ENCODE measurements at regions of chr6 and their contacts with region 1.

Region 1: GRCh38 chr6:105484238-105485161 is 81.6 kb upstream of the PREP start:
- DNase-seq: peak; percentile 55
- ATAC-seq: peak; percentile 80
- H3K4me3 ChIP-seq: no peak overlapping the region
- H3K27ac ChIP-seq: no peak overlapping the region
- H3K4me1 ChIP-seq: peaks cover 15% of the 10 kb centered on the region
- H3K27me3 ChIP-seq: no peaks in the 10 kb centered on the region
- CTCF ChIP-seq: peak; percentile 95
- POLR2A ChIP-seq: peak; percentile 57; the same call in 1 of the 2 replicates
- RAD21 ChIP-seq: peak; percentile 97

Region 2: DNA sequence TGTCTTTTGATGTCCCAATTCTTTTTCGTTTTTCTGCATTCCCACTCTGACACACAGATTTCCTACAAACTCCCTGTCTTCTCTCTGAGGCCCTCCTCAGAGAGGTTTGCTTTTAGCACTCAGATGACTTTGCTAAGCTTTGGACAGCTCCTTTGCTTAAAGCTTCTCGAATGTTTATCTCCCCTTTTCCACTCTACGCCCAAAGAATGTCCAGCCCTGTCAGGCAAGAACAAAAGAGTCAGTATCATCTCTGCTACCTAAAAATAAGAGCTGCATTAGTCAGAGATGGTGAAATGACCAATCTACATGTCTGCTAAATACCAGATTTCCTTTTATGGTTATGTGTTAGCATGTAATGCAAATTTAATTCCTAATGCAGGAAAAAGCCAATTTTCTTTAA is 138.4 kb before region 1 on chr6:
- CTCF ChIA-PET with region 1: no interaction called
- POLR2A ChIA-PET with region 1: no interaction called
- dilution Hi-C with region 1: no loop called
- in situ Hi-C with region 1: no loop called
- intact Hi-C with region 1: no loop called
- DNase-seq: peak; percentile 93
- ATAC-seq: peak; percentile 99
- H3K4me3 ChIP-seq: no peak overlapping the region
- H3K27ac ChIP-seq: no peak overlapping the region
- H3K4me1 ChIP-seq: peaks cover 4% of the 10 kb centered on the region; the same call in 1 of the 2 replicates
- H3K27me3 ChIP-seq: no peaks in the 10 kb centered on the region
- CTCF ChIP-seq: no peak
- POLR2A ChIP-seq: no peak
- RAD21 ChIP-seq: no peak

Region 3: DNA sequence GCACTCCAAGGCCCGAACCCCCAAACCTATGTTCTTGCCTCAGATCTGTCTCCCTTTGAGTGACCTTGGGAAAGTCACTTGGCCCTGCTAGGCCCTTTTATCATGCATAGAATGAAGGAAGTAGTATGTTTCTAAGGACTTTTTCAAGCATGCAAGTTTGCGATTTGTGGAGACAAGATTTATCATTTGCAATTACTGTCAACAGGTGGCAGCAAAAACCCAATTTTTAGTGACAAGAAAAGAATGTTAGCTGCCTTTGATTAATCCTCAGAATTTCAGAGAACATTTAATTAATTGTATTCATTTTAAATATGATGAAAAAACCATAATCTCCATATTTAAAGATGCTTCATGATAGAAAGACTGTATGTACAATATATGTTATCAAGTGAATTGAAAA is 53.3 kb before region 1 on chr6:
- CTCF ChIA-PET with region 1: interaction called, 7 read pairs
- POLR2A ChIA-PET with region 1: no interaction called
- dilution Hi-C with region 1: no loop called
- in situ Hi-C with region 1: no loop called
- intact Hi-C with region 1: loop called (anchors 5 kb)
- DNase-seq: peak; percentile 68
- ATAC-seq: no peak
- H3K4me3 ChIP-seq: no peak overlapping the region
- H3K27ac ChIP-seq: no peak overlapping the region
- H3K4me1 ChIP-seq: peaks cover 23% of the 10 kb centered on the region
- H3K27me3 ChIP-seq: no peaks in the 10 kb centered on the region
- CTCF ChIP-seq: peak; percentile 70
- POLR2A ChIP-seq: no peak
- RAD21 ChIP-seq: peak; percentile 61

Region 4: GRCh38 chr6:105608711-105609374 is 124.3 kb after region 1 on chr6:
- CTCF ChIA-PET with region 1: no interaction called
- POLR2A ChIA-PET with region 1: no interaction called
- dilution Hi-C with region 1: no loop called
- in situ Hi-C with region 1: no loop called
- intact Hi-C with region 1: loop called (anchors 5 kb)
- DNase-seq: peak; percentile 97
- ATAC-seq: peak; percentile 77
- H3K4me3 ChIP-seq: no peak overlapping the region
- H3K27ac ChIP-seq: peak overlapping the region; percentile 92
- H3K4me1 ChIP-seq: peaks cover 20% of the 10 kb centered on the region
- H3K27me3 ChIP-seq: no peaks in the 10 kb centered on the region
- CTCF ChIP-seq: no peak
- POLR2A ChIP-seq: peak; percentile 55; the same call in 1 of the 2 replicates
- RAD21 ChIP-seq: peak; percentile 2; the same call in 1 of the 2 replicates

Region 5: GRCh38 chr6:105835373-105835772 is 350.9 kb after region 1 on chr6:
- CTCF ChIA-PET with region 1: no interaction called
- POLR2A ChIA-PET with region 1: no interaction called
- dilution Hi-C with region 1: no loop called
- in situ Hi-C with region 1: no loop called
- intact Hi-C with region 1: loop called (anchors 10 kb)
- DNase-seq: peak; percentile 48
- ATAC-seq: no peak
- H3K4me3 ChIP-seq: no peak overlapping the region
- H3K27ac ChIP-seq: no peak overlapping the region
- H3K4me1 ChIP-seq: no peaks in the 10 kb centered on the region; the same call in 1 of the 2 replicates
- H3K27me3 ChIP-seq: no peaks in the 10 kb centered on the region
- CTCF ChIP-seq: peak; percentile 38
- POLR2A ChIP-seq: no peak
- RAD21 ChIP-seq: peak; percentile 34; the same call in 1 of the 2 replicates

Region 6: DNA sequence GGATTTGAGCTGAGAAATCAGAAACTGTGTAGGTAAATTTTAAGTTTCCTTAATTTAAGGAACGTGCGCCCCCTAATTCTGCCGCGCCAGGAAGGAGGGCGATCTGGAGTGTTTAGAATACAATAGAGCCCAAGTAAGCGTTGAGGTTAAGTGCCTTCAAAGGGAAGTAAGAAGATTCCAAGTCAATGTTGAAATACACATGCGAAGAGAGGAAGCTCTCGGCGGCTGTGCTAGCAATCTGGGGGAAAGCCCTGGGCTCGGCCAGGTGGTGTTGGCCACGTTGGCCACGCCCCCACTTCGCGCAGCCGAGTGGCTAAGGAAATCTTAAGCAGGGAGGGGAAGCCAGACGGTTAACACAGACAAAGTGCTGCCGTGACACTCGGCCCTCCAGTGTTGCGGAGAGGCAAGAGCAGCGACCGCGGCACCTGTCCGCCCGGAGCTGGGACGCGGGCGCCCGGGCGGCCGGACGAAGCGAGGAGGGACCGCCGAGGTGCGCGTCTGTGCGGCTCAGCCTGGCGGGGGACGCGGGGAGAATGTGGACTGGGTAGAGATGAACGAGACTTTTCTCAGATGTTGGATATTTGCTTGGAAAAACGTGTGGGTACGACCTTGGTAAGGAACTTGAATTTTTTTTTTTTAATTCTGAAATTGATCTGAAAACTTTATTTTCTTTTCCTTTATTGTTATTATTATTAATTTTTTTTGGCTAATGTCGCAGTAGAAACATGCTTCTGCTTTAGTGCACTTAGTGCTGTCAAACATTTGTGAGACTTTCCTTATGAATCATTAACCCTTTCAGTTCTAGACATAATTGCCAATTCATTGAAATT is 601.7 kb after region 1 on chr6 and contains the start of gene PRDM1:
- CTCF ChIA-PET with region 1: no interaction called
- POLR2A ChIA-PET with region 1: no interaction called
- dilution Hi-C with region 1: no loop called
- in situ Hi-C with region 1: loop called (anchors 5 kb)
- intact Hi-C with region 1: loop called (anchors 2 kb)
- DNase-seq: peak; percentile 72
- ATAC-seq: peak; percentile 20
- H3K4me3 ChIP-seq: peak within 1 kb of the TSS; percentile 85
- H3K27ac ChIP-seq: peak within 1 kb of the TSS; percentile 75
- H3K4me1 ChIP-seq: peaks cover 20% of the 10 kb centered on the region
- H3K27me3 ChIP-seq: no peaks in the 10 kb centered on the region
- CTCF ChIP-seq: 0 out of 2 replicates have a peak, but pooled peaks have one; percentile 15
- POLR2A ChIP-seq: peak; percentile 48; the same call in 1 of the 2 replicates
- RAD21 ChIP-seq: peak; percentile 42
- total RNA-seq, gene PRDM1: 2.3 and 6.9 TPM in 2 replicates

Region 7: DNA sequence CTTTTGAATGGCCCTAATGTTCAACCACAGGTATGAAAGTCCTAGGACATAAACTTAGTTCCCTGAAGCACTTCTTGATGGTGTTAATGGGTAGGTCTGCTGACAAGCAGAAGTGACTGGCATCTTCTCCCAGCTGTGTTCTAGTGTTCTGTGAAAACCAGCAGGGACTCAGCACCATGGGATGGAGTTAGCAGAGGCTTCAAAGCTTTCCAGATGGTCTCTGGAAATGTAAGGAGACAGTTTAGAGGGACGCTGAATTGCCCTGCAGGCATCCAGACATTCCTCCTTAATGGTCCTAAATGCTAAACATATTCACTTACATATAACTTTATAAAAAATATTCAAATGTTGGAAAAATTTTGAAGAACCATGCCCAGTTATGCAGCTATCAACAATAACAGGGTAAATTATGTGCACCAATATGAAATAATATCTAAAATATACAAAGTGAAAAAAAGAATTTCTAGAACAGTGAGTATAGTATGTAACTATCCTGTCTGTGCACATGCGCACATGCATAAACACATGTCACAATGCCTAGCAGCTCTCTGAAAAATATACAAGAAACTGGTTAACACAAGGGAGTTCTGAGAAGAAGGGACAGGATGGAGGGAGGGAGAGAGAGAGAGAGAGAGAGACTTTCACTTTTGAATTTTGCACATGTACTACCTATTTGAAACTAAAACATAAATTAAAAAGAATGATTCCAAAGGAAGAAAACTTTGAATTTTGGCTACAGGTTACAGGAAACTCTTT is 688.8 kb after region 1 on chr6:
- CTCF ChIA-PET with region 1: no interaction called
- POLR2A ChIA-PET with region 1: no interaction called
- dilution Hi-C with region 1: no loop called
- in situ Hi-C with region 1: no loop called
- intact Hi-C with region 1: no loop called
- DNase-seq: no peak
- ATAC-seq: no peak
- H3K4me3 ChIP-seq: no peak overlapping the region
- H3K27ac ChIP-seq: no peak overlapping the region
- H3K4me1 ChIP-seq: peaks cover 3% of the 10 kb centered on the region; the same call in 1 of the 2 replicates
- H3K27me3 ChIP-seq: no peaks in the 10 kb centered on the region
- CTCF ChIP-seq: no peak
- POLR2A ChIP-seq: no peak
- RAD21 ChIP-seq: no peak

Region 8: DNA sequence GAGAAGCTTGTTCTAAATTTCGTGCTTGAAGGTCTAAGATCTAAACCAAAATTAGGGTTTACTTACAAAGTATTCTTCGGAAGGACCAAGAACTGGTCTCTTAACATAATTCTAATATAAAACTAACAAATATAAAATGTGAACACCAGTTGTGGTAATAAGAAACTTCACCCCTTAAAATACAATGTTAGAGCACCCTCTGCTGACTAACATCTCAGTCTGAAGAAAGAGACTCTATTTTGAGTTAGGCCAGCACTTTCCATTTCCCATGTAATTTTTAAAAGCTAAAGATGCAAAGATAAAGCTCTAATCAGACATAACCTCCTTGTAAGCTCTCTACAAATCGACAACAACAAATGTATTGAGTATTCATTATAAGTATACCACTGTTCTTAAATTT is 816.4 kb after region 1 on chr6:
- CTCF ChIA-PET with region 1: no interaction called
- POLR2A ChIA-PET with region 1: no interaction called
- dilution Hi-C with region 1: no loop called
- in situ Hi-C with region 1: loop called (anchors 10 kb)
- intact Hi-C with region 1: loop called (anchors 1 kb)
- DNase-seq: peak; percentile 65
- ATAC-seq: peak; percentile 79
- H3K4me3 ChIP-seq: no peak overlapping the region
- H3K27ac ChIP-seq: no peak overlapping the region
- H3K4me1 ChIP-seq: no peaks in the 10 kb centered on the region
- H3K27me3 ChIP-seq: no peaks in the 10 kb centered on the region
- CTCF ChIP-seq: peak; percentile 69
- POLR2A ChIP-seq: no peak
- RAD21 ChIP-seq: peak; percentile 71

Measured in IMR-90 (cell line).